ENCODE measurements at regions of chr20 and their contacts with region 1.

Region 1: DNA sequence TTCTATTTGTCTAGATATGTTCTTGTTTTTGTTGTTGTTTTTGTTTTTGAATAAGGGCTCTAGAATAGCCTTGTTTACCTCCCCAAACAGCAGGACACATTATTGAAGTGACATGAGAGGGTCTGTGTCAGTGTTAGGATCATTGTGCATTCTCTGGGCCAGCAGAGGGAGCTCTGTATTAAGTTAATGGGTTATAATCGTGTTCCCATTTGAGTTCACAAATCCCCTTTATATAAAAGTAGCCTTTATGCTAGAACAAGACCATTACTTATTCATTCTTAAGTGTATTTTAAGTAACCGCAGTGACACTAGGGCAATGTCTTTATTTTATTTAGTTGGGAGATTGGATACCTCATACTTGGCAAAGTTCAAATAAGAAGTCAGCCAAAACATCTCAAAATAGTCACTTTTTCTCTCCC is 44.8 kb downstream of the STK4 start:
- DNase-seq: peak; percentile 74
- H3K4me3 ChIP-seq: no peak overlapping the region
- H3K27ac ChIP-seq: no peak overlapping the region
- H3K4me1 ChIP-seq: no peaks in the 10 kb centered on the region
- H3K27me3 ChIP-seq: no peaks in the 10 kb centered on the region
- CTCF ChIP-seq: peak; percentile 67 to 68
- POLR2A ChIP-seq: no peak

Region 2: DNA sequence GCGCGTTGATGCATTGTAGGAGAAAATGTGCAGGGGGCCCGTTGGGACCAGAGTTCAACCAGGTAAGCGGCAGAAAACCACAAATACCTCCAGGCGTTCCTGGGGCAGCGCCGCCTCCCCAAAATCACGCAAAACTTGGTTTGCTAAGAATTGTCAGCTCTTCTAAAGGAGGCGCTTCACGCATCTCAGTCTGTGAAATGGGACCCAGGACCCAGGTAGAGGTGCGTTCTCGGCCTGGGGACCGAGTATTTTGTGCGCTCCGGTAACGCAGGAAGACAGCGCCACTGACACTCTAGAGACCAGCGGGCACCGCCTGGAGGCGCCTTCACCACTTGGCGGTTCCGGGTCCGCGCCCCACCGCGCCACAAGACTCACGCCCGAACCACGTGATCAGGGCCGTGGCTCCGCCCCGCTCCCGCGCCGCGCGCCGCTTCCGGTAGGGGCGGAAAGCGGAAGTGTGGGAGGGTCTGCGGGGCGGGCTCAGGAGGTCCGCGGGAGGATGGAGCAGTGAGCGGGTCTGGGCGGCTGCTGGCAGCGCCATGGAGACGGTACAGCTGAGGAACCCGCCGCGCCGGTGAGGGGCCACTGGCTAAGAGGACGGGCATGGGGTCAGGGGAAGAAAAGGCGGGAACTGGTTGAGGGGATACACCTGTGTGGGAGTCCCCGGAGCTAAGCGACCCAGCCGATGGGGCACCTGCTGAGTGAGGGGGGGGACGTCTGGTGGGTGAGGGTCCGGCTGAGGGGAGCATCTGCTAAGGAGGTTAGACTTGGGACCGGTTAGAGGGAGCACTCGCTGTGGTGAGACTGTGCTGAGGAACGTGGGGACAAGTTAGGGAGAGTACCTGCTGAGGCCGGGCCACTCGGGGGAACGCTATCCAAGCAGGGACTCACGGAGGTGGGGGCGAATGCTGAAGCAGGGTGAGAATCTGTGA is 44.8 kb before region 1 on chr20 and contains the start of gene STK4:
- CTCF ChIA-PET with region 1: interaction called, 9 read pairs
- POLR2A ChIA-PET with region 1: no interaction called
- dilution Hi-C with region 1: no loop called
- intact Hi-C with region 1: loop called (anchors 1 kb)
- DNase-seq: peak; percentile 95
- H3K4me3 ChIP-seq: peak within 1 kb of the TSS; percentile 59 to 92 (median 64)
- H3K27ac ChIP-seq: peak within 1 kb of the TSS; percentile 44
- H3K4me1 ChIP-seq: peaks cover 50% of the 10 kb centered on the region
- H3K27me3 ChIP-seq: no peaks in the 10 kb centered on the region
- CTCF ChIP-seq: peak; percentile 46 to 67
- POLR2A ChIP-seq: peak; percentile 49
- total RNA-seq, gene STK4: 28.2 and 29.6 TPM in 2 replicates

Region 3: GRCh38 chr20:45229264-45230056 is 218.3 kb after region 1 on chr20:
- CTCF ChIA-PET with region 1: interaction called, 5 read pairs
- POLR2A ChIA-PET with region 1: no interaction called
- dilution Hi-C with region 1: no loop called
- intact Hi-C with region 1: loop called (anchors 1 kb)
- DNase-seq: no peak
- H3K4me3 ChIP-seq: no peak overlapping the region
- H3K27ac ChIP-seq: no peak overlapping the region
- H3K4me1 ChIP-seq: no peaks in the 10 kb centered on the region
- H3K27me3 ChIP-seq: peaks cover 0 to 3% of the 10 kb centered on the region in 2 experiments
- CTCF ChIP-seq: peak; percentile 42 to 47
- POLR2A ChIP-seq: no peak

Measured in endothelial cell of umbilical vein (primary cell).